Activated CD4-positive, alpha-beta T cell treated with anti-CD3 and anti-CD28 coated beads, Interleukin-2, amount 10 ng/mL, durations not matched to agents 24 days and 14 days (primary cell): ENCODE measurements at regions of chr10 and their contacts with region 1.

Region 1: GRCh38 chr10:119315128-119316001 is 108.0 kb downstream of the GRK5 start:
- DNase-seq: peak; percentile 89
- H3K4me3 Mint-ChIP-seq: peak overlapping the region; percentile 38
- H3K27ac Mint-ChIP-seq: peak overlapping the region; percentile 91
- H3K4me1 Mint-ChIP-seq: peaks cover 56% of the 10 kb centered on the region
- H3K27me3 Mint-ChIP-seq: peaks cover 4% of the 10 kb centered on the region

Region 2: DNA sequence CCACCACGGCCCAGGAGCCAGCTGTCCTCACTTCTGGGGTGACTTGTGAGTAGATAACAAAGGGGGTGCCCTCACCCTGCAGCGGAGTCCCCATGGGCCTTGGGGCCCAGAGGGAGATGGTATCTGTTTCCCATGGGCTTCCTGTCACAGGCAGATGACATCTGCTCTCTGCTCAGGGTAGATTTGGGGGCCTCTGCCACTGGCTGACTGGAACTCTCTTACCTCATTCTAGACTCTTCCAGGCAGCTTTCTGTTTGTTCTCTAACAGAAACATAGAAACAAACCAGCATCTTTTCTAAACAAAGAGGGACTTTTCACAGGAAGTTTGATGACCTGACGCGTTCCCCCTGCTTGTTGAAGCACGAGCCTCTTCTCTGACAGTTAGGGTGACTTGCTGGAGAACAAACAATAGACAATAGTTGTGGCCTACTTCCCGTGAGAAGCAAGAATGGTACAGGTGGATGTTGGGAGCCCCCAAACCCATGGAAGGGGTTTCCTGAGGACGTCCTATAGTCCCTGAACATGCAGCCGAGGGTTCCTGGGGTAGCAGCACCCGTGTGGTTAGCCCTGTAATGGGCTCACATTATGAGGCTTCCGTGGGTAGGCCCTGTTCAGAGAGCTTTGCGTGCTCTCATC is 46.4 kb before region 1 on chr10:
- intact Hi-C with region 1: loop called (anchors 2 kb)
- DNase-seq: peak; percentile 95
- H3K4me3 Mint-ChIP-seq: peak overlapping the region; percentile 75
- H3K27ac Mint-ChIP-seq: peak overlapping the region; percentile 99
- H3K4me1 Mint-ChIP-seq: peaks cover 60% of the 10 kb centered on the region
- H3K27me3 Mint-ChIP-seq: no peaks in the 10 kb centered on the region

Region 3: GRCh38 chr10:119341459-119342301 is 26.3 kb after region 1 on chr10:
- intact Hi-C with region 1: loop called (anchors 1 kb)
- DNase-seq: peak; percentile 76
- H3K4me3 Mint-ChIP-seq: no peak overlapping the region
- H3K27ac Mint-ChIP-seq: peak overlapping the region; percentile 38
- H3K4me1 Mint-ChIP-seq: peaks cover 26% of the 10 kb centered on the region
- H3K27me3 Mint-ChIP-seq: no peaks in the 10 kb centered on the region